WTC11 (cell line): ENCODE measurements at regions of chr5 and their contacts with region 1.

Region 1: DNA sequence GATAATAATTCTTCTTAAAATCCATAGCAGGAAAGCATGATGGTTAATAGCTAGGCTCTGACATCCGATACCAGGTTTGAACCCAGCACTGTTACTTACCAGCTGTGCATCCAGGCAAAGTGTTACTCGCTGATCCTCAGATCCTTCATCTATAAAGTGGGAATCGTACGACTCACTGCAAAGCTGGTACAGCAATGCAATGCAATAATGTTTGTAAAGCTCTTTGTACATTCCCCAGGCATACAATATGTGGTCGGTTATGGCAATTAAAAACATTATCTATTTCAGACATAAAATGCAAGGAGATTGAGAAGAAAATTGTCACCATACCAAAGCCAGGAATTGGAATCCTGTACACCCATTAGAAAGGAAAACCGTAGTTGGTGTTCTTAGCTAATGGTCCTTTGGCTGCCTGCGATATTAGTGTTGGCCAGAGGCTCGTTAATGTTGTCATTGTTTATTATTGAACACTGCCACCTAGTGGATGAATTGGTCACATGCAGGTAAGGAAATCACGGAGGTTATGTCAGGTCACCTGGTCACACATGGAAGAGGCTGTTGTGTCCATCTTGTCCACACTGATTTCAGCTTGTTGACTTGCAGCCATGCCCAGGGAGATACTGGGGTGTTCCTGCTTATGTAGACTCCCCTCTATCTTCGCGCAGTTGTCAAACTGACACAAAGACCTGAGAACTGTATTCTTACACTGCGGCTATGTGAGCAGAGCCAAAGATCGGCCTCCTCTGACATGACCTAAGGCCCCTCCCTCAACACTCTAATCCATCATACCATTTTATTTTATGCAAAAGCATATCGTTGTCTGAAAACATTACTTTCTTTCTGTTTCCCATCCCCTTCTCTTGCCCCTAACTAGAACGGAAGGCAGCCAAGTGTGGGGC is 87.5 kb upstream of the PPP2R2B start:
- DNase-seq: peak; percentile 54
- ATAC-seq: peak; percentile 95
- H3K4me3 Mint-ChIP-seq: no peak overlapping the region
- H3K27ac Mint-ChIP-seq: no peak overlapping the region
- H3K4me1 Mint-ChIP-seq: peaks cover 4% of the 10 kb centered on the region
- H3K27me3 Mint-ChIP-seq: no peaks in the 10 kb centered on the region
- CTCF ChIP-seq: peak; percentile 74

Region 2: DNA sequence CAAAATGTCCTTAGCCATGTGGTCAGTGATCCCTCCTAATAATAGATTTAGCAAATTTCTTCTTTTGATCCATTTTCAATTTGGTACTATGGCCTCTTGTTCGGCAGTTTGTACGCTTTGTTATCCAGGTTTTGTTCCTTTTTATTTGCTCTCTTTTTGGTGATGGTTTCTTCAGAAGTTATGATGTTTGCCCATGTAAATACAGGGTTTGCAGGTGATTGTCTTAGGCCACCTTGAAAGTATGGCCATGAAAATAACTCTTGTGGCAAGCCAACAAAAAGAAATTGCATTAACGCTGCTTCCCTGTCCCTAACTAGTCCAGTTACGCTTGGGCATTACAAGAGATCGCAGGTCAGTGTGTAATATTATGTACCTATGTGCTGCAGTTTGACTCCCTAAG is 458.6 kb before region 1 on chr5:
- CTCF ChIA-PET with region 1: no interaction called
- POLR2A ChIA-PET with region 1: no interaction called
- DNase-seq: no peak
- ATAC-seq: no peak
- H3K4me3 Mint-ChIP-seq: no peak overlapping the region
- H3K27ac Mint-ChIP-seq: no peak overlapping the region
- H3K4me1 Mint-ChIP-seq: no peaks in the 10 kb centered on the region
- H3K27me3 Mint-ChIP-seq: no peaks in the 10 kb centered on the region
- CTCF ChIP-seq: no peak

Region 3: GRCh38 chr5:146533260-146533857 is 432.7 kb before region 1 on chr5:
- CTCF ChIA-PET with region 1: interaction called, 94 read pairs
- POLR2A ChIA-PET with region 1: no interaction called
- DNase-seq: peak; percentile 84
- ATAC-seq: peak; percentile 90
- H3K4me3 Mint-ChIP-seq: 0 out of 2 replicates have a peak overlapping the region, but pooled peaks have one; percentile 33
- H3K27ac Mint-ChIP-seq: no peak overlapping the region; the same call in 1 of the 2 replicates
- H3K4me1 Mint-ChIP-seq: peaks cover 15% of the 10 kb centered on the region
- H3K27me3 Mint-ChIP-seq: no peaks in the 10 kb centered on the region; the same call in 1 of the 2 replicates
- CTCF ChIP-seq: peak; percentile 71

Region 4: GRCh38 chr5:146541958-146542849 is 423.8 kb before region 1 on chr5:
- CTCF ChIA-PET with region 1: interaction called, 65 read pairs
- POLR2A ChIA-PET with region 1: no interaction called
- DNase-seq: peak; percentile 86
- ATAC-seq: peak; percentile 99
- H3K4me3 Mint-ChIP-seq: no peak overlapping the region
- H3K27ac Mint-ChIP-seq: no peak overlapping the region
- H3K4me1 Mint-ChIP-seq: peaks cover 8% of the 10 kb centered on the region
- H3K27me3 Mint-ChIP-seq: no peaks in the 10 kb centered on the region
- CTCF ChIP-seq: peak; percentile 86

Region 5: GRCh38 chr5:146565764-146566367 is 400.1 kb before region 1 on chr5:
- CTCF ChIA-PET with region 1: interaction called, 17 read pairs
- POLR2A ChIA-PET with region 1: no interaction called
- DNase-seq: peak; percentile 69
- ATAC-seq: peak; percentile 98
- H3K4me3 Mint-ChIP-seq: no peak overlapping the region
- H3K27ac Mint-ChIP-seq: 0 out of 2 replicates have a peak overlapping the region, but pooled peaks have one; percentile 44
- H3K4me1 Mint-ChIP-seq: peaks cover under 1% of the 10 kb centered on the region
- H3K27me3 Mint-ChIP-seq: no peaks in the 10 kb centered on the region
- CTCF ChIP-seq: peak; percentile 44; the same call in 1 of the 2 replicates

Region 6: DNA sequence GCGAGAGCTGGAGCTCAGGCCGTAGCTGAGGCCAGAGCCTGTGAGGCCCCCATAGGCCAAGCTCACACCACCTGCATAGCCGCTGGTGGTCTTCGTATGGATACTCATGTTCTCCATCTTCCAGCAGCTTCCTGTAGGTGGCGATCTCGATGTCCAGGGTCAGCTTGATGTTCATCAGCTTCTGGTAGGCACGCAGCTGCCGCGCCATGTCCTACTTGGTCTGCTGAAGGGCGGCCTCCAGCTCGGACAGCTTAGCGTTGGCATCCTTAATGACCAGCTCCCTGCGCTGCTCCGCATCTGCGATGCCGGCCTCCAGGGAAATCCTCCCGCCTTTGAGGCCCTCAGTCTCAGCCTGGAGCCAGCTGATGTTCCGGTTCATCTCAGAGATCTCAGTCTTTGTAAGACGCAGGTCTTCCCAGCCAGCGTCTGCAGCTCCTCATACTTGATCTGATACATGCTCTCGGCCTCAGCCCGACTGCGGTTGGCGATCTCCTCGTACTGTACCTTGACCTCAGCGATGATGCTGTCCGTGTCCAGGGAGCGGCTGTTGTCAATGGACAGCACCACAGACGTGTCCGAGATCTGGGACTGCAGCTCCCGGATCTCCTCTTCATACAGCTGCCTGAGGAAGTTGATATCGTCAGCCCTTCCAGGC is 259.6 kb before region 1 on chr5:
- CTCF ChIA-PET with region 1: interaction called, 15 read pairs
- POLR2A ChIA-PET with region 1: no interaction called
- DNase-seq: peak; percentile 66
- ATAC-seq: peak; percentile 91
- H3K4me3 Mint-ChIP-seq: no peak overlapping the region
- H3K27ac Mint-ChIP-seq: no peak overlapping the region
- H3K4me1 Mint-ChIP-seq: peaks cover 7% of the 10 kb centered on the region
- H3K27me3 Mint-ChIP-seq: no peaks in the 10 kb centered on the region
- CTCF ChIP-seq: no peak

Region 7: DNA sequence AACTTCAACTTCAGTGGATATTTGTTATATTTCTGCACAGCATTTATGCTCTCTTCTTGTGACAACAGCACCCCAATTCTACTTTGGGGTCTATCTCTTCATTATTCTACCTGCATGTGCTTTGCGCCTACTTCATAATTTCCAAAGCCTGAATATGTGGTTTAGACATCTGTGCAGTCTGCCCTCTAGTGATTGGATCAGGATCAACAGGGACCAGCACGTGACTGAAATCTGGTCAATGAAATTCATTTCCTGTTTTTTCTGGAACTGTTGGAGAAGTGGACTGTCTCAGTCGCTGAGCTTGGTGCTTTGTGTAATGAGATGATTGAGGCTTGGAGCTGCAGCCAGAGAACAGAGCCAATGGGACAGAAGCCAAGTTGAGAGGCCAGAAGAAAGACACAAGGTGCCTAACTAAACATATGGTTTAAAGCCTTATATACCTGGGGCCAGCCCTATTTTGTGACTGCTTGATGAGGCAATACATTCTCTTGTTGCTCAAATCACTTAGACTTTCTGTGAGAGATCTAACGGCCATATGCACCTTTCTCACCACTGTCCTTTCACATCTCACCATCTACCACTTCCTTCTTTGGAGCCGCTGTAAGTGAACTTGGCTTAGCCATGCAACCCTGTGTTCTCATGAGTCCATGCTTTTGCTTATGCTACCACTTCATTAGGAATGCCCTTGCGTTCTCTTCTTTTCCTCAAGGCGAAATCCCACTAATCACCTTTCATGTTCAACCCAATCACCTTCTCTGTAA is 18.6 kb before region 1 on chr5:
- CTCF ChIA-PET with region 1: interaction called, 10 read pairs
- POLR2A ChIA-PET with region 1: no interaction called
- DNase-seq: peak; percentile 26
- ATAC-seq: peak; percentile 82
- H3K4me3 Mint-ChIP-seq: no peak overlapping the region
- H3K27ac Mint-ChIP-seq: peak overlapping the region; percentile 5; the same call in 1 of the 2 replicates
- H3K4me1 Mint-ChIP-seq: peaks cover 17% of the 10 kb centered on the region
- H3K27me3 Mint-ChIP-seq: no peaks in the 10 kb centered on the region
- CTCF ChIP-seq: peak; percentile 27

Region 8: GRCh38 chr5:147169399-147169798 is 203.4 kb after region 1 on chr5:
- CTCF ChIA-PET with region 1: no interaction called
- POLR2A ChIA-PET with region 1: no interaction called
- DNase-seq: no peak
- ATAC-seq: no peak
- H3K4me3 Mint-ChIP-seq: no peak overlapping the region
- H3K27ac Mint-ChIP-seq: no peak overlapping the region
- H3K4me1 Mint-ChIP-seq: no peaks in the 10 kb centered on the region
- H3K27me3 Mint-ChIP-seq: no peaks in the 10 kb centered on the region
- CTCF ChIP-seq: no peak